Mammary epithelial cell (primary cell): ENCODE measurements at regions of chr16 and their contacts with region 1.

Region 1: DNA sequence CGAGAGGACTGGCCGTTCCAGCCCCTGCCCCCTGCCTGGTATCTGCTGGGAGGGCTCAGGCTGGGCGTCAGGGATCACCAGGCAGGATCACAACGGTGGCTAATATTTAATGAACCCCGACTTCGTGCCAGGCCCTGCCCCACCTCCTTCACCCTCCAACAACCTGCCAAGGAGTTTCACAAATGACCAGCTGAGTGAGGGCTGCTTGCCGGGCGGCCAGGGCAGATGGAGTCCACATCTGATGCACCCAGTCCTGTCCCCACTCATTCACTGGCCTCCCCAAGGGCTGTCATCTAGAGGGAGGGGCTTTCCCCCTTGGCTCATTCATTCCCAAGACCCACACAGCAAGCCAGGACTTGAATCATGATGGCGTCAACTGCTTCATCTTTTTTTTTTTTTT is 17.5 kb downstream of the UBALD1 start:
- DNase-seq: peak; percentile 92
- H3K4me3 ChIP-seq: no peak overlapping the region
- H3K27ac ChIP-seq: no peak overlapping the region
- H3K4me1 ChIP-seq: peaks cover 10% of the 10 kb centered on the region
- H3K27me3 ChIP-seq: no peaks in the 10 kb centered on the region
- CTCF ChIP-seq: no peak

Region 2: GRCh38 chr16:4517812-4518680 is 79.1 kb before region 1 on chr16:
- CTCF ChIA-PET with region 1: no interaction called
- dilution Hi-C with region 1: loop called (anchors 5 kb)
- in situ Hi-C with region 1: no loop called
- intact Hi-C with region 1: no loop called
- DNase-seq: no peak
- H3K4me3 ChIP-seq: no peak overlapping the region
- H3K27ac ChIP-seq: no peak overlapping the region
- H3K4me1 ChIP-seq: peaks cover 9% of the 10 kb centered on the region
- H3K27me3 ChIP-seq: no peaks in the 10 kb centered on the region
- CTCF ChIP-seq: peak; percentile 40 to 60

Region 3: DNA sequence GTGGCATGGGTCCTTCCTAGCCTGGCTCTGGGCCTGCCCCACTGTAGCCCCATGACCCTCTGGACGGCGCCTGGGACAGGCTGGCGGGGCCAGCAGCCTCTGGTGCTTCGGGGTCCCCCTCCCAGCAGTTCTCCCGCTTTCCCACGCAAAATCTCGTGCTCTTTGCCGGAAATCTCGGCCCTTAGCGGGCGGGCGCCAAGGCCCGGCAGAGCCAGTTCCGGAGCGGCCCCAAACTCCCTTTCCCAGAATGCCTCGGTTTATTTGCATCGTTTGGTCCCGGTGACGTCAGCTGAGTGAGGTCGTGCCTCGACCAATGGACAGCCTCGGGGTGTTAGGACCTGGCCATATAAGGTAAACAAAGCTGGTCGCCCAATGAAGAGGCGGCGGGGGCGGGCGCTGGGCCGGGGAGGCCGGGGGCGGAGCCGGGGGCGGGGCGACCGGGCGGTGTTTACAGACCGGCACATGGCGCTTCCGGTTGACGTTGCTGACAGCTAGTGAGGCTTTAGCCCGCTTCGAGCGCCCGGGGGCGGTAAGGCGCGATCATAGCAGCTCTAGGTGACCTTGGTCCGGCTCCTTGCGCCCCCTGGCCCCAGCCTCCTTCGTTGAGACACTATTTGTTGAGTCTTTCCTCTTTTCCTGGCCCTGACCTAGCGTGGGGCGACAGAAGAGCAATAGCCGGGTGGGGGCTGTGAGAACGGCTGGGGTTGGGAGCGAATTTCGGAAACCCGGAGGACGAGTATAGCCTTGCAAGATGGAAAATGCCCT is 19.1 kb after region 1 on chr16:
- CTCF ChIA-PET with region 1: no interaction called
- dilution Hi-C with region 1: no loop called
- in situ Hi-C with region 1: no loop called
- intact Hi-C with region 1: no loop called
- DNase-seq: peak; percentile 99
- H3K4me3 ChIP-seq: peak overlapping the region; percentile 56 to 68 (median 59)
- H3K27ac ChIP-seq: peak overlapping the region; percentile 52
- H3K4me1 ChIP-seq: peaks cover 53% of the 10 kb centered on the region
- H3K27me3 ChIP-seq: no peaks in the 10 kb centered on the region
- CTCF ChIP-seq: peak in 1 of 2 donors; percentile 31

Region 4: GRCh38 chr16:4640572-4641305 is 43.6 kb after region 1 on chr16:
- CTCF ChIA-PET with region 1: no interaction called
- dilution Hi-C with region 1: loop called (anchors 5 kb)
- in situ Hi-C with region 1: no loop called
- intact Hi-C with region 1: no loop called
- DNase-seq: no peak
- H3K4me3 ChIP-seq: no peak overlapping the region
- H3K27ac ChIP-seq: no peak overlapping the region
- H3K4me1 ChIP-seq: no peaks in the 10 kb centered on the region
- H3K27me3 ChIP-seq: no peaks in the 10 kb centered on the region
- CTCF ChIP-seq: no peak